ENCODE measurements at regions of chr13 and their contacts with region 1.

Region 1: DNA sequence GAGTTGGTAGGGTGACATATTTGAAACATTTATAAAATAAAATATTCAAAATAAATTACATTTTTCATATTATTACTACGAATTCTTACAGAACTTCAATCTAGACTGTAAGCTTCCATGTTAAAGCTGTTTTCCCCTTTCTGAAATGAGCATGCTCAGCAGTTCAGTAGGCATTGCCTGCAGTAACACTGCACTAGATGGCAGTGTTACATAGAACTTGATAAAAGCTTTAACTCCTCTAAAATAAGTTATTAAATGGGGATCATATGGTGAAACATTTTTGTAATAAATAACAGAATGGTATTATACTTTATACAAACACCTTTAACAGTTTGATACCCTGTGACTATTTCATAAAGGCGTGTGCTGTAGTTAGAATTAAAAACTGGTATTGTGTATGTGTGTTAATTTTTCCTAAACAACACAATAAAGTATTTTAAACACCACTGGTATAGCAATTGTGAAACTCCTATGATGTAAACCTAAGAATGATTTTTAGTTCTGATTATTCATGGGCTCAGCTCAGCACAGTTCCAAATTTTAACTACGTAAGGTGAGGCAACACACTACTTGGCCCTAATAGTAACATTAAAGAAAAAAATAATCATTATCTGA is 11.6 kb upstream of the GPR18 start:
- DNase-seq: no peak
- ATAC-seq: peak; percentile 73

Region 2: DNA sequence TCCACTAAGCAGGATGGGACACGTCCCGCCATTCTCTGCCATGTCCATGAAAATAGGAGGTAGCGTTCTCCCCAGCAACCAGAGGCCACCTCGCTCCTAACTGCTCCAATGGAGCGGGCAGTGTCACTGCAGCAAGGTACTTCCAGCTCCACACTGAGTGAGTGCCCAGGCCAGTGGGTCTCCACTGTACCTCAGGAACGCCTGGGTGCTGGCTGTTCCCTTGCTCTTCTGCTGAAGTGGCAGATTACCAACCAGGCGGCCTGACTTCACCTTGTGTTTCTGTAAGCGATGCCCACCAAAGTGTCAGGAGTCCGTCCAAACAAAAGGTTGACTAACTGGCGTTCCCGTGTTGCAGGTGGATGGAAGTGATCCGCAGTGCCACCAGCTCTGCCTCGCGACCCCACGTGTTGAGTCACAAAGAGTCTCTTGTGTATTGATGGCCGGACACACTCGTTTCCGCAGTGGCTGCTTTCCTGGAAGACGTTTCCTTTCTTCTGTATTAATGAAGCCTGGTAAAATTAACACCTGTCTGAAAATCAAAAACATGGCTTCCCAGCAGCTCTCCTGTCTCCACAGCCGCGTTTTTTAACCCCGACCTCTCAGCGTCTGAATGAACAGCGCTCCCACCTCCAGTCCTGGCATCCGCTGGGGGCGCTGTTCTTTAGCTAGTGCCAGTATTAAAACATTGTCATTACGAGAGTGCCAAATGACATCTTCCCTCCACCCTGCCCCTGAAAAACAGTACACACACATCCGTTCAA is 821.7 kb before region 1 on chr13:
- intact Hi-C with region 1: no loop called
- DNase-seq: peak; percentile 71
- ATAC-seq: peak; percentile 22

Region 3: DNA sequence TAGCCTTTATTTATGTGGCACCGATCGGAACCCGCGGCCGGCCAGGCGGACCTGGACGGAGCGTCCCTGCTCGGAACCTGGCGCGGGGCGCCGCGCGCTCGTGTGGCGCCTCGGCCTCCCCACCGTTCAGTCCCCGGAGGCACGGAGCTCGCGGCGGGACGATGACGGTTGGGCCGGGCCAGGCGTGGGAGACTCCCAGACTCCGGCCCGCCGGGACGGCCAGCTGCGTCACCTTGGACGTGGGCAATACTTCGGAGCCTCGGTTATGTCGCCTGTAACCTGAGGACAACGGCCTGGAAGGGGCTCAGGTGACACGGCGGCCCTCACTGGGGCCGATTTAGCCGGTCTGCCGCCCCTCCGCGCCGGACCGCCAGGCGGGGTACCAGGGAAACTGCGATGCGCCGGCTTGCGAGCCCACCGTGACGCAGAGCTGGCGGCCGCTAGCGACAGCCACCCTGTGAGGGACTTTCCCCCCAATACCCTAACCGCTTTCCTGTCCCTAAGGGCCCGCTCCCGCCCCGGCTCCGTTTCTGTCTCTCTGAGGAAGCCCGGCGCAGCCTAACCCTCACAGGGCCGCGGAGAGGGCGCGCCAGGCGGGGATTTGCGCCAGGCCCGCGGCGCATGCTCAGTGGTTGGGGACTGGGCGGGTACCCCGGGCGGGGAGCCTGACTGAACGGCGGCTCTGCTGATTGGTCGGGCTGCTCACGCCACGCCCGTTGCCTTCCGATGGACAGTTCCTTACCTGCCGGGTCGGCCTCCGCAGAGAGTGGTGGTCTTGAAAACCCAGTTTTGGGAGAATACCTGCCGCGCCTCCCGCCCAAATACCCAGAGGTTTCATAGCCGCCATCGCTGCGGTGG is 182.4 kb before region 1 on chr13:
- intact Hi-C with region 1: no loop called
- DNase-seq: peak; percentile 93
- ATAC-seq: peak; percentile 98

Region 4: GRCh38 chr13:99436686-99437416 is 167.1 kb after region 1 on chr13:
- intact Hi-C with region 1: loop called (anchors 5 kb)
- DNase-seq: peak; percentile 91
- ATAC-seq: peak; percentile 72

Region 5: GRCh38 chr13:100209857-100210825 is 940.4 kb after region 1 on chr13:
- intact Hi-C with region 1: no loop called
- DNase-seq: no peak
- ATAC-seq: no peak